ENCODE measurements at regions of chr2 and their contacts with region 1.

Region 1: GRCh38 chr2:200703127-200703925 is 108.4 kb upstream of the BZW1 start:
- DNase-seq: no peak
- ATAC-seq: no peak
- H3K4me3 Mint-ChIP-seq: no peak overlapping the region
- H3K27ac Mint-ChIP-seq: no peak overlapping the region; the same call in 1 of the 2 replicates
- H3K4me1 Mint-ChIP-seq: peaks cover 17% of the 10 kb centered on the region
- H3K27me3 Mint-ChIP-seq: no peaks in the 10 kb centered on the region
- CTCF ChIP-seq: no peak

Region 2: GRCh38 chr2:199973703-199974102 is 729.6 kb before region 1 on chr2:
- CTCF ChIA-PET with region 1: interaction called, 11 read pairs
- POLR2A ChIA-PET with region 1: no interaction called
- DNase-seq: no peak
- ATAC-seq: peak; percentile 84
- H3K4me3 Mint-ChIP-seq: no peak overlapping the region
- H3K27ac Mint-ChIP-seq: no peak overlapping the region
- H3K4me1 Mint-ChIP-seq: peaks cover 8% of the 10 kb centered on the region
- H3K27me3 Mint-ChIP-seq: no peaks in the 10 kb centered on the region
- CTCF ChIP-seq: peak; percentile 31; the same call in 1 of the 2 replicates

Region 3: DNA sequence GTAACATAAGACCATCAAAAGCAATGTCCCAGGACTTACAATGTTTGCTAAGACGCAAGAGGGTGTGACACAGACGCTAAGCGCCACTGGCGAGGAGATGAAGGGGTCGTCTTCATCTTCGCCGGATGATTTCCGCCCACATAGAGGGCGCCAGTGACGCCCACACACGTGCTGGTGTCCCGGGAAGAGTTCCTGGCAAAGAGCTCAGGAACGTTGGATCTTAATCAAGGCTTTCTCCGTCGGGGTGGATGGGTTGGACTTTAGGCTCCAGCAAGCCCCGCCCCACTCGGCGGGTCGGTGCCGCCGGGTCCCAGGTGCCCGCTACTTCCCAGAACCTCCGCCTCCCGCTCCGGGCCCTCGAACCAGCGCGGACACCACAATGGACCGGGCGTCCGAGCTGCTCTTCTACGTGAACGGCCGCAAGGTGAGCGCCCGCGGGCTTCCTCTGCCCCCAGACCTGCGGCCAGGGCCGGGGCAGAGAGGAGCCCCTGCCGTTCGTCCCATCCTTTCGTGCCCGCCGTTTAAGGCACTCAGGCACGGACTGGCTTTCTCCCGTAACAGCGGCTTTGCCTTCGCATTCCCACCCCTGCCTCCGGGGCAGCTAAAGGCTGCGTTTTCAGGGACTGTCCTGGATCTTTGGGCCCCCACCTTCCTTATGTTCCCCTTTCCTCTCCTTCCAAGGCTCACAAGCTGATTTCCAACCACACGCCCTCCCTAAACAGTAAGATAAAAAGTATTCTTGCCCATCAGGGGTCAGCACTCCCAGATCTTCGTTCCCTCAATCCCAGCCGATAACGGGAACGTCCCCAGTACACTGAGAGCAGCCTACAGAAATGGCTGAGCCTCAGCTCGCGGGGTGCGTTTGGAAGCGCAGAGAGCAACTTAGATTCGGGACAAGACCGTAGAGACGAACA is 117.3 kb before region 1 on chr2 and contains the start of gene AOX1:
- CTCF ChIA-PET with region 1: interaction called, 38 read pairs
- POLR2A ChIA-PET with region 1: no interaction called
- DNase-seq: peak; percentile 77
- ATAC-seq: peak; percentile 86
- H3K4me3 Mint-ChIP-seq: peak within 1 kb of the TSS; percentile 83
- H3K27ac Mint-ChIP-seq: peak within 1 kb of the TSS; percentile 74; the same call in 1 of the 2 replicates
- H3K4me1 Mint-ChIP-seq: peaks cover 10% of the 10 kb centered on the region
- H3K27me3 Mint-ChIP-seq: peaks cover 24% of the 10 kb centered on the region
- CTCF ChIP-seq: no peak
- total RNA-seq, gene AOX1: 3.6 to 5.4 TPM (median 4.8 TPM) in 3 replicates

Region 4: DNA sequence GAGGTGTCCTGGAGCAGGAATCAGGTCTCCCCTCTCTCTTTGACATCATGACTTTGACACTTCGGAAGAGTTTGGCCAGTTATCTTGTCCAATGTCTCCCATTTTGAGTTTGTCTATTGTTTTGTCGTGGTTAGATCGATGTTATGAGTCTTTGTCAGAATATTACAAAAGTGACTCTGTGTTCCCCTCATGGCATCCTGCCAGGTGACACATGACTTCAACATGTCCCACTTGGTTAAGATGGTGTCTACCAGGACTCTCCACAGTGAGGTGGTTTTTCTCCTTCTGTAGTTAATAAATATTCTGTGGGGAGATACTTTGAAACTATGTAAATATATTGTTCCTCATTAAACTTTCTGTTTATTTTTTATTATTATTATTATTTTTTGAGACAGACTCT is 31.7 kb after region 1 on chr2:
- CTCF ChIA-PET with region 1: interaction called, 53 read pairs
- POLR2A ChIA-PET with region 1: no interaction called
- DNase-seq: no peak
- ATAC-seq: no peak
- H3K4me3 Mint-ChIP-seq: no peak overlapping the region
- H3K27ac Mint-ChIP-seq: no peak overlapping the region
- H3K4me1 Mint-ChIP-seq: peaks cover 39% of the 10 kb centered on the region
- H3K27me3 Mint-ChIP-seq: no peaks in the 10 kb centered on the region
- CTCF ChIP-seq: no peak

Region 5: GRCh38 chr2:200756618-200757321 is 53.4 kb after region 1 on chr2:
- CTCF ChIA-PET with region 1: no interaction called
- POLR2A ChIA-PET with region 1: no interaction called
- DNase-seq: no peak
- ATAC-seq: peak; percentile 67
- H3K4me3 Mint-ChIP-seq: no peak overlapping the region
- H3K27ac Mint-ChIP-seq: no peak overlapping the region
- H3K4me1 Mint-ChIP-seq: 0 out of 2 replicates have a peak, but pooled peaks cover 3% of the 10 kb centered on the region
- H3K27me3 Mint-ChIP-seq: no peaks in the 10 kb centered on the region
- CTCF ChIP-seq: no peak

Region 6: DNA sequence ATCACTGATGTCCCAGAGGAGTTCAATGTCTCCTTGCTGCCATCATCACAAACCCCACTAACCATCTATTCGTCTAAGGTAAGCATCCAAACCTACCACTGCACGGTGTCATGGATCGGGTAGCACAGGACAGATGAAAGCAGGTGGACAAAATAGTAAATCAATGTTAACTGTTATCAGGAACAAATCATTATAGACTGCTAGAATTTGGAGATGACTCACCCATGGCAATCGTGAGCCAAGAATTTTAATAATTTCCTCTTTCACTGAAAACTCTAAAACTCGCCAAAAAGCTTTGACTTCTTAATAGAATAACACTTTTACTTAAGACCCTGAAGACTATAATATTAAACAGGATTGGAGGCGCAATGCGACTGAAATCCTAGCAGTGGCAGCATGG is 74.7 kb after region 1 on chr2:
- CTCF ChIA-PET with region 1: no interaction called
- POLR2A ChIA-PET with region 1: no interaction called
- DNase-seq: no peak
- ATAC-seq: no peak
- H3K4me3 Mint-ChIP-seq: no peak overlapping the region
- H3K27ac Mint-ChIP-seq: no peak overlapping the region
- H3K4me1 Mint-ChIP-seq: peaks cover 14% of the 10 kb centered on the region
- H3K27me3 Mint-ChIP-seq: no peaks in the 10 kb centered on the region
- CTCF ChIP-seq: no peak

Region 7: GRCh38 chr2:200795044-200795443 is 91.7 kb after region 1 on chr2:
- CTCF ChIA-PET with region 1: interaction called, 10 read pairs
- POLR2A ChIA-PET with region 1: no interaction called
- DNase-seq: peak; percentile 40
- ATAC-seq: peak; percentile 74
- H3K4me3 Mint-ChIP-seq: no peak overlapping the region
- H3K27ac Mint-ChIP-seq: no peak overlapping the region
- H3K4me1 Mint-ChIP-seq: peaks cover 13% of the 10 kb centered on the region
- H3K27me3 Mint-ChIP-seq: no peaks in the 10 kb centered on the region
- CTCF ChIP-seq: no peak

Region 8: DNA sequence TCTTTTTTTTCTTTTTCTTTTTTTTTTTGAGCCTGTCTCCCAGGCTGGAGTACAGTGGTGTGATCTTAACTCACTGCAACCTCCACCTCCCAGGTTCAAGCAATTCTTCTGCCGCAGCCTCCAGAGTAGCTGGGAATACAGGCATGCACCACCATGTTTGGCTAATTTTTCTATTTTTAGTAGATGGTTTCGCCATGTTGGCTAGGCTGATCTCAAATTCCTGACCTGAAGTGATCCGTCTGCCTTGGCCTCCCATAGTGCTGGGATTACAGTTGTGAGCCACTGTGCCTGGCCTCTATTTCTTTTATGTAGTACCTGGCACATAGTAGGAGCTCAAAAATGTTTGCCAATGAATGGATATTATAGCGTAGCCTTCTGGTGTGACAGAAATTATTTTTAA is 405.9 kb after region 1 on chr2:
- CTCF ChIA-PET with region 1: no interaction called
- POLR2A ChIA-PET with region 1: no interaction called
- DNase-seq: no peak
- ATAC-seq: no peak
- H3K4me3 Mint-ChIP-seq: no peak overlapping the region
- H3K27ac Mint-ChIP-seq: no peak overlapping the region
- H3K4me1 Mint-ChIP-seq: peaks cover 5% of the 10 kb centered on the region
- H3K27me3 Mint-ChIP-seq: peaks cover 3% of the 10 kb centered on the region; the same call in 1 of the 2 replicates
- CTCF ChIP-seq: no peak